ENCODE measurements at regions of chr2 and their contacts with region 1.

Region 1: DNA sequence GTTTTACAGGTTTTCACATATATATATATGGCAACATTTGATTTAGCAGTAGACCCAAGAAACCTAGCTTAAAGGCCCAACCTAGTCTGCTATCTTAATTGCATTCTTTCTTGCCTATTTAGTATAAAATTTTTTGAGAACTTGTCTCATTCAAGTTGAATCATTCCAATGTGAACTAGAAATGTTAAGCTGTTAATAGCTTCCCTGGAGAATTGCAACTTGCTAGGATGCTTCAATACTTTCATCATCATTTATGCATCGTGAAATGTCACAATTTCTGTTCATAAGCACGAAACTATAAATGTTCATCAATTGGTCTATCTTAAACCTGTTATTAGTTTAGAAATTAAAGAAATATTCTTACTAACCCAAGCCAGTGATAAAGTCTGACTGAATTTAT is 217.6 kb downstream of the BABAM2 start:
- DNase-seq: no peak
- ATAC-seq: no peak
- H3K4me3 ChIP-seq: no peak overlapping the region
- H3K27ac ChIP-seq: no peak overlapping the region
- H3K4me1 ChIP-seq: no peaks in the 10 kb centered on the region
- H3K27me3 ChIP-seq: no peaks in the 10 kb centered on the region
- CTCF ChIP-seq: no peak

Region 2: GRCh38 chr2:27844821-27845255 is 263.3 kb before region 1 on chr2:
- CTCF ChIA-PET with region 1: no interaction called
- POLR2A ChIA-PET with region 1: interaction called, 12 read pairs
- intact Hi-C with region 1: no loop called
- DNase-seq: no peak
- ATAC-seq: no peak
- H3K4me3 ChIP-seq: no peak overlapping the region
- H3K27ac ChIP-seq: no peak overlapping the region
- H3K4me1 ChIP-seq: no peaks in the 10 kb centered on the region
- H3K27me3 ChIP-seq: no peaks in the 10 kb centered on the region
- CTCF ChIP-seq: no peak

Region 3: GRCh38 chr2:28601616-28602015 is 493.5 kb after region 1 on chr2:
- CTCF ChIA-PET with region 1: no interaction called
- POLR2A ChIA-PET with region 1: no interaction called
- intact Hi-C with region 1: no loop called
- DNase-seq: no peak
- ATAC-seq: no peak
- H3K4me3 ChIP-seq: no peak overlapping the region
- H3K27ac ChIP-seq: no peak overlapping the region
- H3K4me1 ChIP-seq: peaks cover 29% of the 10 kb centered on the region
- H3K27me3 ChIP-seq: no peaks in the 10 kb centered on the region
- CTCF ChIP-seq: no peak